Endothelial cell of umbilical vein (primary cell): ENCODE measurements at regions of chr7 and their contacts with region 1.

Region 1: DNA sequence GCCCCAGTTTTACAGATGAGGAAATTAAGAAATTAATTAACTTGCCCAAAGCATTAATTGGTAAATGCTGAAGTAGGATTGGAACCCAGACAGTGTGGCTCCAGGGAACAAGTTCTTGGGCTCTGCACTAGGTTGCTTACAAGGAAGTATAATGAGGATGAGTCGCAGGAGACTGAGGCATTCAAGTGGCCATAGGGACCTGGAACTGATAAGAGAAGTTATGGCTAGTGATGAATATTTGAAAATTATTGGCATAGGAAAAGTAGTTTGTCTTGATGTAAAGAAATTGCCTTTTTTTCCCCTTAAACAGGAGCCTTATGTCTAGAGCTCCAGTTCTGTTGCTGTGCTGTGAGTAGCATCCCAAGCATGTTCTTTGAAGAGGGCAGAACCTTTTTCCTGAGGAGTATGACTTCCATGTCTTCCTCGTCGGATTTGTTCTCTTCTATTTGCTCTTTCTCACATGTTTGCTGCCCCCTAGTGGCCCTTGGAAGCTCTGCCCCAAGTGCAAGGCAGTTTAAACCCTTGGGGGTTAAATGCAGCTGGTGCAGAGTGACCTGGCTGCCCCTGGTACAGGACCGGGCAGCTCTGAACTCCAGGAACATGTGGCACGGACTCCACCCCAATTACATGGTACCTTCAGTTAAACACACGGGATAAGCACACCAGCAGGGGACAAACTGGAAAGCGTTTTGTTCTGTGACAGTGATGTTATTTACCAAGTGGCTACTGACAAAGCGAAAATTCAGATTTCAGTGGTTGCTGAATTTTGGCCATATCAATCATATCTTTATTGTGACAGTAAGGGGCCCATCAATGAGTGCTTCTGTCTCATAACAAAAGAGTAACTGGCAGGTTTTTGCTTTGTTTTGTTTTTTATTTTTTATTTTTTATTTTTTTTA is 148.8 kb downstream of the HECW1 start:
- DNase-seq: peak; percentile 70
- H3K4me3 ChIP-seq: no peak overlapping the region
- H3K27ac ChIP-seq: no peak overlapping the region
- H3K4me1 ChIP-seq: no peaks in the 10 kb centered on the region
- H3K27me3 ChIP-seq: peaks cover 3 to 7% of the 10 kb centered on the region in 2 experiments
- CTCF ChIP-seq: peak; percentile 90 to 91
- POLR2A ChIP-seq: no peak

Region 2: GRCh38 chr7:42690794-42691639 is 570.2 kb before region 1 on chr7:
- CTCF ChIA-PET with region 1: no interaction called
- POLR2A ChIA-PET with region 1: no interaction called
- dilution Hi-C with region 1: no loop called
- intact Hi-C with region 1: no loop called
- DNase-seq: peak; percentile 32
- H3K4me3 ChIP-seq: no peak overlapping the region
- H3K27ac ChIP-seq: no peak overlapping the region
- H3K4me1 ChIP-seq: no peaks in the 10 kb centered on the region
- H3K27me3 ChIP-seq: no peaks in the 10 kb centered on the region
- CTCF ChIP-seq: peak; percentile 25 to 43
- POLR2A ChIP-seq: no peak

Region 3: GRCh38 chr7:42931834-42932651 is 329.2 kb before region 1 on chr7 and contains the starts of genes MRPL32 and PSMA2:
- CTCF ChIA-PET with region 1: interaction called, 14 read pairs
- POLR2A ChIA-PET with region 1: no interaction called
- dilution Hi-C with region 1: no loop called
- intact Hi-C with region 1: no loop called
- DNase-seq: peak; percentile 99
- H3K4me3 ChIP-seq: peak within 1 kb of the TSS; percentile 54 to 95 (median 91)
- H3K27ac ChIP-seq: peak within 1 kb of the TSS; percentile 64
- H3K4me1 ChIP-seq: peaks cover 29% of the 10 kb centered on the region
- H3K27me3 ChIP-seq: no peaks in the 10 kb centered on the region
- CTCF ChIP-seq: no peak
- POLR2A ChIP-seq: peak; percentile 74
- total RNA-seq, gene MRPL32: 56.6 and 62.2 TPM in 2 replicates
- total RNA-seq, gene PSMA2: 110 and 118 TPM in 2 replicates

Region 4: DNA sequence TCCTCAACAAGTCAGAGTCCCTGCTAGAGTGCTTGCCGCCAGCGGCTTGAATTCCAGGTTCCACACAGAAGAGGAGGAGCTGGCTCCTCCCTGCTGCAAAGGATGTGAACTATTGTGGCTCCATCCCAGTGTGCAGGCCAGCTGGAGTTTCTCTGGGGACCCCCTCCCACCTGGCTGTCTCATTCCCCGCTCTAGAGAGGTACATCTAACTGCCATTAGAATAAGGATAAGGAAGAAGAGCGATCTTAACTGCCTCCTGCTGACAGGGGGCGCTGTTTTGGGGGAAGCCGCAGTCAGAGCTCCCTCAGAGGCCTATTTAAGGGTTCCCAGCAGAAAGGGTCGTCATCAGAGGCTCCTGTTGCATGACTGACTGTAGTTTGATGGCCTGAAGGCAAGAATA is 189.6 kb before region 1 on chr7:
- CTCF ChIA-PET with region 1: interaction called, 4 read pairs
- POLR2A ChIA-PET with region 1: no interaction called
- dilution Hi-C with region 1: no loop called
- intact Hi-C with region 1: loop called (anchors 1 kb)
- DNase-seq: no peak
- H3K4me3 ChIP-seq: no peak overlapping the region
- H3K27ac ChIP-seq: no peak overlapping the region
- H3K4me1 ChIP-seq: no peaks in the 10 kb centered on the region
- H3K27me3 ChIP-seq: no peaks in the 10 kb centered on the region
- CTCF ChIP-seq: peak in 1 of 2 donors; percentile 27
- POLR2A ChIP-seq: no peak

Region 5: GRCh38 chr7:43175570-43176200 is 85.5 kb before region 1 on chr7:
- CTCF ChIA-PET with region 1: interaction called, 21 read pairs
- POLR2A ChIA-PET with region 1: no interaction called
- dilution Hi-C with region 1: no loop called
- intact Hi-C with region 1: loop called (anchors 1 kb)
- DNase-seq: no peak
- H3K4me3 ChIP-seq: no peak overlapping the region
- H3K27ac ChIP-seq: no peak overlapping the region
- H3K4me1 ChIP-seq: no peaks in the 10 kb centered on the region
- H3K27me3 ChIP-seq: peaks cover 2 to 10% of the 10 kb centered on the region in 2 experiments
- CTCF ChIP-seq: no peak
- POLR2A ChIP-seq: no peak

Region 6: DNA sequence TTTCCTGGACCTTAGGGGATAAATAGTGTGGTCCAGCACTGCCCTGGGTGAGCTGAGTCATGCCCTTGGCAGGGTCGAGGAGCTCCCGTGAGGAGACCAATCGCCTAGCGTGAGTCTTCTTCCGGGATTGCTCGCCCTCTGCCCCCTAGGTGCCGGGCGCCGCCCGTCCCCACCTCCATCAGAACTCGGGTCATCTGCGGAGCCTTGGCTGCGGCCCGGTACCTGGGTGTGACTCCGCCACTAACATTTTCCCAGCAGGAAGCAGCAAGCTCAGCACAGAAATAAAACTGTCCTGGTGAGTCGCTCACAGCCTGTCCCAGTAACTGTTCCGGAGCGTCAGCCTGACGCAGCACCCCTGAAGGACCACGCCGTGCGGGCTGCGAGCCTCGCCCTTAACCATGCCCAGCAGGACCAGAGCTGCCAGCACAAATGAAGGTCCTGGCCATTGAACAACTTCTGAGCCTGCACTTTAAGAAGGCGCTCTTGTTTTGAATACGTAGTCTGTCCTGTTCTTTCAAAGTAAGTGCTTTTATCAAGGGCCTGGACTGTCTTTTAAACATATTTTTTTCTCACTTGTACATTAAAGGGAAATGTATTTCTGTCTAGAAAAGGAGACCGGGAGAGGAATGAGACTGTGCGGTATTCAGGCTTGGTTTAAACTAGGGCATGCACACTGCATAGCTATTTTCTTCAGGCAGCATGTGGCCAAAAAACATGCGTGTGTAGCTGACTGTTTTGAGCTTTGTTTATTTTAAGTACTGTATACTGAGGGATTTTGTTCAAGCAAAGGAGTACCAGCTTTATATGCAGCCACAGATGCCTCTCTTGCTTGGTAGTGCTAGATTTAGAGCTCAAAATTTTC is 12.0 kb before region 1 on chr7:
- CTCF ChIA-PET with region 1: interaction called, 20 read pairs
- POLR2A ChIA-PET with region 1: no interaction called
- dilution Hi-C with region 1: no loop called
- intact Hi-C with region 1: no loop called
- DNase-seq: no peak
- H3K4me3 ChIP-seq: no peak overlapping the region
- H3K27ac ChIP-seq: no peak overlapping the region
- H3K4me1 ChIP-seq: no peaks in the 10 kb centered on the region
- H3K27me3 ChIP-seq: peaks cover 0 to 5% of the 10 kb centered on the region in 2 experiments
- CTCF ChIP-seq: no peak
- POLR2A ChIP-seq: no peak

Region 7: GRCh38 chr7:43721193-43721806 is 460.1 kb after region 1 on chr7:
- CTCF ChIA-PET with region 1: interaction called, 11 read pairs
- POLR2A ChIA-PET with region 1: no interaction called
- dilution Hi-C with region 1: no loop called
- intact Hi-C with region 1: loop called (anchors 1 kb)
- DNase-seq: peak; percentile 65
- H3K4me3 ChIP-seq: no peak overlapping the region
- H3K27ac ChIP-seq: no peak overlapping the region
- H3K4me1 ChIP-seq: no peaks in the 10 kb centered on the region
- H3K27me3 ChIP-seq: no peaks in the 10 kb centered on the region
- CTCF ChIP-seq: peak; percentile 29 to 49
- POLR2A ChIP-seq: no peak

Region 8: DNA sequence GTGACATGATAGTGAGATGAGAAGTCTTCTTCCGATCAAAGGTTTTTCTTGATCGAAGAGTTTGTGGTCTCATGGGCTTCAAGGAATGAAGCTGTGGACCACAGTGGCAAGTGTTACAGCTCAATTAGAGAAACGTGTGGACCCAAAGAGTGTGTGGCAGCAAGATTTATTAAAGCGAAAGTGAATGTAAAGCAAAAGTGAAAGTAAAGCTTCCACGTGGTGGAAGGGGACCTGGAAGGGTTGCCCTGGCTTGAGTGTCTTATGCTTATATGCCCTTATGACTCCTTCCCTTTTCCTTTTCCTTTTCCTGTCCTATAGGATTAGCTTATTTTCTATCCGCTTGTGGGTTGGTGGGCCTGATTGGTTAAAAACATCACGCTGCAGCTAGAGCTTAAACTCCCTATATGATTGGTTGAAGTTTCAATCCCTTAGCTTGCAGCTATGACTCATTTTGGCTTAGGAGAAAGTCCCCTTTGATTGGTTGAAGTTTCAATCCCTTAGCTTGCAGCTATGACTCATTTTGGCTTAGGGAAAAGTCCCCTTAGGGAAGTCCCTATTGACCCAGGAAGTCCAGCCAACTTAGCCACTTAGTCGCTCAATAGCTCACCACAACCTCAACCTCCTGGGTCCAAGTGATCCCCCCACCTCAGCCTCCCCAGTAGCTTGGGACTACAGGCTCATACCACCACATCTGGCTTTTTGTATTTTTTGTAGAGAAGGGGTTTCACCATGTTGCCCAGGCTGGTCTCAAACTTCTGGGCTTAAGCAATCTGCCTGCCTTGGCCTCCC is 573.4 kb after region 1 on chr7:
- CTCF ChIA-PET with region 1: interaction called, 6 read pairs
- POLR2A ChIA-PET with region 1: no interaction called
- dilution Hi-C with region 1: no loop called
- intact Hi-C with region 1: loop called (anchors 1 kb)
- DNase-seq: peak; percentile 22
- H3K4me3 ChIP-seq: no peak overlapping the region
- H3K27ac ChIP-seq: no peak overlapping the region
- H3K4me1 ChIP-seq: no peaks in the 10 kb centered on the region
- H3K27me3 ChIP-seq: peaks cover 0 to 3% of the 10 kb centered on the region in 2 experiments
- CTCF ChIP-seq: no peak
- POLR2A ChIP-seq: no peak